ENCODE measurements at regions of chr11 and their contacts with region 1.

Region 1: GRCh38 chr11:112961146-112961668 is at the start of gene NCAM1:
- DNase-seq: peak; percentile 90 to 98 (median 95)

Region 2: GRCh38 chr11:112588252-112588694 is 372.9 kb before region 1 on chr11:
- intact Hi-C with region 1: loop called (anchors 10 kb)
- DNase-seq: peak; percentile 47 to 92 (median 76)

Region 3: DNA sequence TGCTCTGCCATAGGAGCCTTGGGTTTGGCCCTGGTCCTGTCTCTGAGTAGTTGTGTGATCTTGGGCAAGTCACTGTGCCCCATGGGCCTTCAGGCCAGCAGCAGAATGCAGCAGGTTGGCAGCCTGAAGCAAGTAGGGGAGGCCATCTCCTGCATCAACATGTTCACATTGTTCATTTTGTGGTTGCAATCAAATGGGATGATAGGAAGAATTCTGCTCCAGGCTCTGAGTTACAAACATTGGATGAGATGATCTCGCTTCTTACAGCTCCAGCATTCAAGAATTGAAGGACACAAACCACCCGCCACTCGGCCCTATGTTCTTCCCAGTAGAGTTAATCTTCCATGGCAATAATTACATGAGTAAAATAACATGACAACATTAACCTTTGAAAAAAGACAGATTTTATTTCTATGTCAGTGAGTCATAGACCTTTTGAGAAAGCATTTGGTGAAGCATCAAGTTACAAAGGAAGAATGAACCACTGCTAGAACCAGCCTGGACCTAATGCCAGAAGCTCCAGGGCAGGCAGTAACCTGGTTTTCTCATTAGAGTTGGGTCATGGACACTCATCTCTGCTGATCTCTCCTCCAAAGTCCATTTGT is 308.3 kb before region 1 on chr11:
- intact Hi-C with region 1: no loop called
- DNase-seq: no peak

Region 4: DNA sequence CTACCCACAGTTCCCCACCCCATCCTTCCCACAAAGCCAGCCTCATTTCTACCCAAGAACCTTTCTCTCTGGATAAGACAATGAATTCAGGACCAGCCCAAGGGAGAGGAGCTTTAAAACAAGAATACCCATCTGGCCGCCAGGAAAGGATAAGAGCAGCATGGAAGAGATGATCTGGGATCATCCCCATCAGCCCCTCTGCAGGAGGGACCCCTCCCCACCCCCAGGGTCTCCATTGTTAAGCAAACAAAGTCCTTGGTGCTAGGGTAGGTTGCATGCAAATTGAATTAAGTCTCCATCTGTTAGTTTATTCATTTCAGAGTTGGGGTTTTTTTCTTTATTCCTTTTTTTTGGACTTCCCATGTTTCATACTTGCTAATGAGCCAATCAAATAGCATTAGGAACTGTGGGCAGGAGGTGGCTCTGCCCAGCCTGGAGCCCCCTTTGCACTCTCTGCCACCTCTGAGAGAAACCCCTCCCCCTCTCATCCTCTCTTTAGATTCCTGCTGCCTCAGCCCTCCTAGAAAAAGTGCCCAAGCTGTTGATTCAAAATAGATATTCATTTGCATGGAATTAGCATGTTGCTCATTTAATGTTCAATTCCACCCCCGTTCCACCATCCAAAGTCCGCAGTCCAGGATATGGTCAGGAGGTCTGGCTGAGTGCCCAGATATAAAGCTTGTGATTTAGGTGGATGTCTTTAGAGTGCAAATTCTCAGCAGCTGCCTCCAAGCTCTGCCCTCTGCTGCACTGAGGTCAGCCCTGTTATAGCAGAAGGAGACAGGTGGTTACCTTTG is 138.5 kb before region 1 on chr11:
- intact Hi-C with region 1: no loop called
- DNase-seq: no peak

Region 5: DNA sequence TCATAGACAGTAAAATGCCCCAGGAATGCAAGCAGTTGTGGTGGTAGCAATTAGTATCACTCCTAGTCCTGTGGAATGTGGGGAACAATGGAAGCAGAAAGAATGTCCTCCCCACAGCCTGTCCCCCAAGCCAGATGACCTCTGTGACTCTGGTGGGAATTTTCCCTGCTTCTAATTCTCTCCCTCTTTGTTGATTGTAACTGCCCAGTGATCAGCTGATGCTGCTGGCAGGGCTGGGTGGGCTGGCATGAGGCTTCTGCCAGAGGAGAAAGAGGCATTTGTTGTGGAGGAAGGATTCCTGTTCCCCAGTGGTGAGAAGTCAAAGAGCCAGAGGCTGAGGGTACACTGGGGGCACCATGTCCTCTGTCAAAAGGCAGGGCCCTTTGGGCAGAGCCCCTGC is 116.7 kb before region 1 on chr11:
- intact Hi-C with region 1: loop called (anchors 5 kb)
- DNase-seq: peak; percentile 71 to 97 (median 90)

Region 6: DNA sequence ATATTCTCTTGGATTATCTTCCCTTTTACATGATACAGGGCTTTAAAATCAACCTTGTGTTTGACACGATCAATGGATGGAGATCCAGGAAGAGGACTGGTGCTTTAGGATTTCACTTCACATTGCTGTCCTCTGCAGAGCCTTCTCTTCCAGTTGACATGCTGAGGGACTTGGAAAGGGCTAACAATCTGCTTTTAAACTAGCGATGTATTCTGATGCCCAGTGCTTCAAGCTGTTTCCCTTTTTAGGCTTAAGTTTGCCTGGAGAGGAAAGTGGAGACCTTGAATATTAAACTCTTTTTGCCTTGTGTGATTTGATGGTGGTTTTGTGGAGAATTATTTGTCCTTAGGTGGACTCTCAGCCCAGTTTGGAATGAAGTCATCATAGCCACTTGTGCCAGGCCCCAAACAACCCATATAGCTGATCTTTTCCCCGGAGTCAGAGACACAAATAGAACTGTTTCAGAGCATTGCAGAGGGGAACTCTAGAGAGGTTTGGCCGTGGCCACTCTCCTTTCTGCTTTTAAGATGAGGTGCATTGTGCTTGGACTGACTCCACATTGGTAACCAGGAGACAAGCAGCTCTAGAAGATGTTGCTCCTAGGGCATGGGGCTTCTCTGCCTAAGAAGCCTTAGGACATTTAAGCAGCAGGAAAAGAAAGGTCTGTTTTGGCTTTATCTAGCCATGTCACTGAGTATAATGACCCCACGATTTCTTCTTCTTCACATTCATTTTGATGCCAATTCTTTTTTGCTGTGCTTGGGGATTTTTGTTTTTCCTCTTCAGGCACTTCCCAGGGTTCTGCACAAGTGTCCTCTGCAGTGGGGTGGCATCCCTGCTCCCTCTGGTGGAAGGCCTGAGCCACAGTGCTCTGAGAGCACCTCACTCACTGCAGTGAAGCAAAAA is 152.8 kb after region 1 on chr11:
- intact Hi-C with region 1: loop called (anchors 10 kb)
- DNase-seq: peak; percentile 60 to 95 (median 83)

Region 7: GRCh38 chr11:113242767-113243397 is 281.7 kb after region 1 on chr11:
- intact Hi-C with region 1: loop called (anchors 10 kb)
- DNase-seq: peak in 35 of 42 donors; percentile 24 to 74 (median 49)

Region 8: GRCh38 chr11:113274713-113275582 is 313.7 kb after region 1 on chr11:
- intact Hi-C with region 1: loop called (anchors 10 kb)
- DNase-seq: peak in 32 of 42 donors; percentile 23 to 79 (median 51)

Measured in head of caudate nucleus (tissue), 42 donors.